Posterior vena cava (tissue), 2 donors: ENCODE measurements at regions of chr9 and their contacts with region 1.

Region 1: GRCh38 chr9:97982683-97983588 is at the start of gene ANP32B:
- DNase-seq: peak; percentile 97
- total RNA-seq, gene ANP32B: 95.8 to 98.0 TPM

Region 2: DNA sequence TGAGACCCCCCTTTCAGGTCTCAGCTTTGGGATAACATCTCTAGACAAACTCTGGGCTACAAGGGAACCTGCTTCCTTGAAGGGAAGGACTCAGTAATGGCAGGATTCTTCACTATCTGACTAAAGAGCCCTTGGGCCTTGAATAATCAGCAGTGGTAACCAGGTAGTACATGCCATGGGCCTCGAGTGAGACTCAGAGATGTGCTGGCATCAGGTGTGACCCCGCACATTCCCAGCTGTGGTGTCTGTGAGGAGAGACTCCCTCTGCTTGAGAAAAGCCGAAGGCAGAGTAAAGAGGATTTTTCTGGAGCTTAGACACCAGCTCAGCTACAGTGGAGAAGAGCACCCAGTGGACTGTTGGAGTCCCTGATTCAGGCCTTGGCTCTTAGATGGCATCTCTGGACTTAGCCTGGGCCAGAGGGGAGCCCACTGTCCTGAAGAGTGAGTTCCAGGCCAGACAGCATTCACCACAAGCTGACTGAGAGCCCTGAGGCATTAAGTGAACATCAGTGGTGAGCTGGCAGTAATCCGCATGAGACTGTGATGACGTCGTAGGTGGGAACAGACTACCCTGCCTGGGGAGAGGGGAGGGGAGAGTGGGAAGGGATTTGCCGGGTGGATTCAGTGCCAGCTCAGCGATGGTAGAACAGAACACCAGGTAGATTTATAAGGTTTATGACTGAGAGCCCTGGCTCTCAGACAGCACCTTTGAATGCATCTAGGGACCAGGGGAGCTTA is 1123.3 kb before region 1 on chr9:
- intact Hi-C with region 1: no loop called
- DNase-seq: no peak

Region 3: DNA sequence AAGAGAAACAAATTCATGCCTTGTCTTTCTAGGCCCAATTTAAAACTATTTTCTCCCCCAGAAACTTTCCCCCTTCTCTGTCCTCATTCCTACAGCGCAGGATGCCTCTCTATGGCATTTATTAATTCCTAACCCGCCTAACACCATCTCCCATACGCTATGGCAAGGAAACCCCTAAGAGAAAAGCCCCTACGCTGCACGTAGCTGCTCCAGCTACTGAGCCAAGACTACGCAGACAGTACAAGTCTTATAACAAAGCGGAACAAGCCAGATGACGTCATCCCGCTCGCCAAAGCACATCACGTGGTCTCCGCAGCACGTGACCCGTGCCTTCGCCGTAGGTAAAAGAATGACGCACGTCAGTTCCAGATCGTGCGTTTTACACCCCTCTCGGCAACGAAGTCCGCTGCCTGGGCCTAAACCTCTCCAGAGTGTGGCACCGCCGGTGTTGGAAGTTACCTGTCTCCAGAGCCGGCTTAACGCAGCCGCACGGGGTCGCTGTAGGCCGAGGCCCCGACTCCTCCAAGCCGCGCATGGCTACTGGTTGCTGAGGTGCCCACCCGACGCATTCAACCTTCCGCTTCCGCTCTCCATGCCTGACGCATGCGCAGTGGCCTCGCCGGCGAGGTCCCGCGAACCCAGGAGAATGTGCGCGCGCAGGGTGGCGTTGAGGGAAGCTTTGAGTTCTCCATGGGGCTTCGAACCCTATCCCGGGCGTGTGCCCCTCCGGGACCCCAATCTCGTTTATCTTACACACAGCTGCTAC is 60.8 kb before region 1 on chr9 and contains the start of gene TRMO:
- intact Hi-C with region 1: loop called in 1 of 2 experiments (anchors 5 kb)
- DNase-seq: peak; percentile 99
- total RNA-seq, gene TRMO: 7.0 to 8.7 TPM

Region 4: DNA sequence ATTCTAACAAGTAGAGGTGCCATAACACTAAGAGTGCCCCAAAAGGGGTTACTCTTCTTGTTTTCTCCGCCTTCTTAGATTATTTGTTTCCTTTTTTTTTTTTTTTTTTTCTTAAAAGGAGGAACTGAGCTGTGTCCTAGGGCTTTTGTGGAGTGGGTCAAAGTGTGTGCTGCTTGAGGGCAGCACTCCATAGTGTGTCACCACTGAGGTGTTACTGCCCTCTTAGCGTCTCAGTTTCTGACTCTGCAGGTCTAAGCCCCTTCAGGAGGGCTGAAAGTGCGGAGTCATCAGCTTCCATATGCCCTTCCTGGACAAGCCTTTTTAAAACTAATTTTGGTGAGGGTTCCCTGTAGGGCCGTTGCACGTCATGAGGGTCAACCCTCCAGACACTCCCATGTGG is 61.0 kb after region 1 on chr9:
- intact Hi-C with region 1: no loop called
- DNase-seq: no peak

Region 5: DNA sequence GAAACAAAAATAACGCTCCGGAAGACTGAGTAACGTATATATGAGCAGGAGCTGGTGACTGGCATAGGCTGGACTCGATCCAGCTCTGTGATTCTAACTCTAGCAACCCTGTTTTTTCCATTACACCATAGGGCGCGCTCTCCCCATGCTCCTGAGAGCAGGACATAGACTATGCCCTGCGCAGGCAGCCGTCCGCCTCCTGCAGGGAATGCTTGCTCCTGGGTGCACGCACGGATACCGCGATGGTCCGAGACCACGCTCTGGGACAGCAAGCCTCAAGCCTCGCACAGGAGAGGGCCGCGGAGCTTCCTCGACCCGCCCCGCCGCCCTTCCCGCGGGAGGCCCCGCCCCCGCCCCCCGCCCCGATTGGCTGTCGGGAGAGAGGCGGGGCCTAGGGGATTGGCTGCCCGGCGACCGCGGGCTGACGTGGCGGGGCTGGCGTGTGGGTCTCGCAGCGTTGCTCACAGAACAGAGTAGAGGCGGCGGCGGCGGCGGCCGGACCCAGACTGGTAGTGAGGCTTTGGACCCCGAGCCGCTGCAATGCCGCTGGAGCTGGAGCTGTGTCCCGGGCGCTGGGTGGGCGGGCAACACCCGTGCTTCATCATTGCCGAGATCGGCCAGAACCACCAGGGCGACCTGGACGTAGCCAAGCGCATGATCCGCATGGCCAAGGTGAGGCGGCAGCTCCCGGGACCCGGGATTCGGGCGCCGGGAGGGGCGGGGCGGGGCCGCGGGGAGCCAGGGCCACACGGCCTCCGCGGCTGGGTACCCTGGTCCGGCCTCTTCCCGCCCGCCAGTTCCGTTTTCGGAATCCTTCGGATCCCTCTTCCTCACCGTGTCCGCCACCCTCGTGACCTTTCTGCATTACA is 73.6 kb after region 1 on chr9 and contains the start of gene NANS:
- intact Hi-C with region 1: loop called in 1 of 2 experiments (anchors 10 kb)
- DNase-seq: peak; percentile 98
- total RNA-seq, gene NANS: 25.5 to 31.9 TPM